ENCODE measurements at regions of chr1 and their contacts with region 1.

Region 1: GRCh38 chr1:55164906-55165305 is 50.3 kb downstream of the USP24 start:
- DNase-seq: no peak
- ATAC-seq: peak in 1 of 4 experiments; percentile 19
- H3K4me3 ChIP-seq: no peak overlapping the region
- H3K4me3 Mint-ChIP-seq: no peak overlapping the region
- H3K27ac ChIP-seq: no peak overlapping the region
- H3K27ac Mint-ChIP-seq: peak overlapping the region in 1 of 2 donors; percentile 71
- H3K4me1 ChIP-seq: no peaks in the 10 kb centered on the region
- H3K4me1 Mint-ChIP-seq: peaks cover 11 to 18% (median 15%) of the 10 kb centered on the region in 3 donors
- H3K27me3 ChIP-seq: no peaks in the 10 kb centered on the region
- H3K27me3 Mint-ChIP-seq: no peaks in the 10 kb centered on the region

Region 2: GRCh38 chr1:55179177-55179835 is 14.4 kb after region 1 on chr1:
- CTCF ChIA-PET with region 1: interaction called in 1 of 2 experiments, 10 read pairs
- POLR2A ChIA-PET with region 1: no interaction called
- DNase-seq: no peak
- ATAC-seq: no peak
- H3K4me3 ChIP-seq: no peak overlapping the region
- H3K4me3 Mint-ChIP-seq: no peak overlapping the region
- H3K27ac ChIP-seq: no peak overlapping the region
- H3K27ac Mint-ChIP-seq: peak overlapping the region; percentile 29 to 55
- H3K4me1 ChIP-seq: peaks cover 0 to 9% of the 10 kb centered on the region in 2 experiments
- H3K4me1 Mint-ChIP-seq: peaks cover 51 to 53% (median 52%) of the 10 kb centered on the region in 3 donors
- H3K27me3 ChIP-seq: no peaks in the 10 kb centered on the region
- H3K27me3 Mint-ChIP-seq: no peaks in the 10 kb centered on the region